ENCODE measurements at regions of chrX and their contacts with region 1.

Region 1: GRCh38 chrX:155148724-155149537 is 67.3 kb upstream of the VBP1 start:
- H3K4me3 ChIP-seq: no peak overlapping the region
- H3K27ac ChIP-seq: no peak overlapping the region
- H3K4me1 ChIP-seq: no peaks in the 10 kb centered on the region
- CTCF ChIP-seq: peak; percentile 50

Region 2: GRCh38 chrX:155132110-155132509 is 16.8 kb before region 1 on chrX:
- CTCF ChIA-PET with region 1: interaction called, 11 read pairs
- POLR2A ChIA-PET with region 1: no interaction called
- H3K4me3 ChIP-seq: no peak overlapping the region
- H3K27ac ChIP-seq: no peak overlapping the region
- H3K4me1 ChIP-seq: no peaks in the 10 kb centered on the region
- CTCF ChIP-seq: no peak

Region 3: GRCh38 chrX:155169881-155170280 is 20.9 kb after region 1 on chrX:
- CTCF ChIA-PET with region 1: interaction called, 19 read pairs
- POLR2A ChIA-PET with region 1: no interaction called
- H3K4me3 ChIP-seq: no peak overlapping the region
- H3K27ac ChIP-seq: no peak overlapping the region
- H3K4me1 ChIP-seq: no peaks in the 10 kb centered on the region
- CTCF ChIP-seq: no peak